ENCODE measurements at regions of chr22 and their contacts with region 1.

Region 1: DNA sequence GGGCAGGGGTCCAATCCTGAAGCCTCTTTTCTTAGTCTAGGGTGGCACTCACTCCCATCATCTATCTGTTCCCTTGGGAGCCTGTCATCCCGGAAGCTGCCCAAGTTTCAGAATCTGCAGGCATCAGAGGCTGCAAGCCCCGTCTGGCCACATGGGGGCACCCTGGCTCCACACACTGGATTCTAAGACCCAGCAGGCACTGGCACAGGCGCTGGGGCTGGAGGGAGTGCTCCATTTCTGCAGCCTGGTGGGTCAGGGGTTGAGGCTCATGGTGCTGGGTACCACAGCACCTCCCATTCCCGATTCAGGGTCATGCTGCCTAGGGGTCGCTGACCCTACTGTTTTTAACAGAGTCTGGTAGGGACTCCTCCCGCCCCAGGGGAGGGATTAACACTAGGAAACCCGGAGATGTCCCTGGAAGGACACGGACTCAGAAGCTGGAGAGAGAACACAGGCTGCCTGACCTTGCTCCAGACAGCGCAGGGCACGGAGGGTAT is 243.9 kb upstream of the SYN3 start:
- DNase-seq: peak; percentile 77 to 93 (median 88)
- H3K4me3 ChIP-seq: peak overlapping the region in 21 of 59 donors; percentile 1 to 49 (median 14)
- H3K27ac ChIP-seq: peak overlapping the region in 26 of 59 donors; percentile 4 to 71 (median 44)
- H3K27me3 ChIP-seq: no peaks in the 10 kb centered on the region
- CTCF ChIP-seq: peak; percentile 62 to 97 (median 94)

Region 2: DNA sequence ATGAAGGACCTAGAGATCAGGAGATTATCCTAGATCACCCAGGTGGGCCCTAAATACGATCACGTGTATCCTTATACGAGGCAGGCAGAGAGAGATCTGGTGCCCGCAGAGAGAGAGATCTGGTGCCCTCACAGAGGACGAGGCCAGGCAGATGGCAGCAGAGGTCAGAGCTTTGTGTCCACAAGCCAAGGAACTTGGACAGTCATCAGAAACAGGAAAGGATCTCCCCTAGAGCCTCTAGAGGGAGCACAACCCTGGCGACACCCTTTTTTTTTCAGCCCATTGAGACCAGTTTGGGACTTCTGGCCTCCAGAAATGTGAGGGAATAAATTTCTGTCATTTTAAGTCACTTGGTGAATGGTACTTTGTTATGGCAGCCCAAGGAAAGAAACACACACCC is 526.1 kb before region 1 on chr22:
- intact Hi-C with region 1: no loop called
- DNase-seq: no peak
- H3K4me3 ChIP-seq: no peak overlapping the region
- H3K27ac ChIP-seq: no peak overlapping the region
- H3K27me3 ChIP-seq: no peaks in the 10 kb centered on the region
- CTCF ChIP-seq: peak in 12 of 56 donors; percentile 7 to 30 (median 11)

Region 3: GRCh38 chr22:32880893-32881596 is 421.1 kb before region 1 on chr22:
- intact Hi-C with region 1: no loop called
- DNase-seq: peak in 6 of 10 donors; percentile 32 to 57 (median 53)
- H3K4me3 ChIP-seq: no peak overlapping the region
- H3K27ac ChIP-seq: peak overlapping the region in 25 of 59 donors; percentile 8 to 71 (median 44)
- H3K27me3 ChIP-seq: no peaks in the 10 kb centered on the region
- CTCF ChIP-seq: no peak

Region 4: GRCh38 chr22:33341611-33342010 is 39.5 kb after region 1 on chr22:
- intact Hi-C with region 1: no loop called
- DNase-seq: no peak
- H3K4me3 ChIP-seq: no peak overlapping the region
- H3K27ac ChIP-seq: no peak overlapping the region
- H3K27me3 ChIP-seq: no peaks in the 10 kb centered on the region
- CTCF ChIP-seq: no peak

Region 5: GRCh38 chr22:33579448-33580093 is 277.5 kb after region 1 on chr22:
- intact Hi-C with region 1: loop called (anchors 2 to 5 kb)
- DNase-seq: peak in 7 of 10 donors; percentile 43 to 51 (median 46)
- H3K4me3 ChIP-seq: no peak overlapping the region
- H3K27ac ChIP-seq: no peak overlapping the region
- H3K27me3 ChIP-seq: no peaks in the 10 kb centered on the region
- CTCF ChIP-seq: peak; percentile 74 to 96 (median 90)

Region 6: GRCh38 chr22:34105461-34106062 is 803.5 kb after region 1 on chr22:
- intact Hi-C with region 1: loop called (anchors 10 kb)
- DNase-seq: peak; percentile 28 to 75 (median 59)
- H3K4me3 ChIP-seq: no peak overlapping the region
- H3K27ac ChIP-seq: no peak overlapping the region
- H3K27me3 ChIP-seq: peaks cover 0 to 19% (median 0%) of the 10 kb centered on the region in 45 donors
- CTCF ChIP-seq: peak; percentile 36 to 80 (median 70)

Region 7: GRCh38 chr22:35014812-35015211 is 1712.7 kb after region 1 on chr22:
- intact Hi-C with region 1: loop called (anchors 10 kb)
- DNase-seq: no peak
- H3K4me3 ChIP-seq: no peak overlapping the region
- H3K27ac ChIP-seq: no peak overlapping the region
- H3K27me3 ChIP-seq: peaks cover 0 to 12% (median 0%) of the 10 kb centered on the region in 45 donors
- CTCF ChIP-seq: no peak

Region 8: GRCh38 chr22:35150183-35151107 is 1848.3 kb after region 1 on chr22:
- intact Hi-C with region 1: loop called in 1 of 2 experiments (anchors 5 kb)
- DNase-seq: peak in 9 of 10 donors; percentile 45 to 79 (median 63)
- H3K4me3 ChIP-seq: peak overlapping the region in 1 of 59 donors; percentile 5
- H3K27ac ChIP-seq: no peak overlapping the region
- H3K27me3 ChIP-seq: peaks cover 0 to 28% (median 0%) of the 10 kb centered on the region in 45 donors
- CTCF ChIP-seq: peak; percentile 40 to 83 (median 72)